Caco-2 (cell line): ENCODE measurements at regions of chr1 and their contacts with region 1.

Region 1: DNA sequence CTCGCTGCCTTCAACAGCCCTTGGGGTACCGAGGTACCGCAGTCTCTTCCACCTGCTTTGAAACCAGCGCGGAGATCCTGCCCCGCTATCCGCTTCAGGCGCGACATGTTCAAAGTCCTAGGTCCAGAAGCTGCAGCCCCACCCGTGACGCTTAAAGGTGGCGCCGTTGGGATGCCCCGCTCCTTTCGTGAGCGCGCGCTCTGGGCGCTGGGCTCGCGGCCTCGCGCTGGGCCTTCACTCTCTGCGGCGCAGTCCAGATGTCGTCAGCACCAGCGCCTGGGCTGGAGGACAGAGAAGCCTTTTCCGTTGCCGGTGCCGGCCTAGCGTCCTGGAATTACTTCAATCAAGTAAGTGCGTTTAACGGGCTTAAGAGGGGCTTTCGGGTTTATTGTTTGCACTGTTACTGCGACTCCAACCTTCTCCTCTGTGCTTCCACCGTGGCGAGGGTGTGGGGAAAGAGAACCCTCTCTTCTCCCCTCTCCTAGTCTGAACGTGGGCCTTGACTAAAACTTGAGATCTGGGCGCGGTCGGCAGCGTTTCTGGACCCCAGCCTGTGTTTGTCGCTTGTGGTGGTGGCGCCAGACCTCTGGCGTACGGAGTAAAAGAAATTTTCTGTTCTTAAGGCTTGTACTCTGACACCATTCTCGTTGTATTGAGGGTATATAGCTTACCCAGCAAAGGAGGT is at the start of gene LRRC40:
- DNase-seq: peak; percentile 92 to 93
- H3K4me3 ChIP-seq: peak within 1 kb of the TSS; percentile 72
- H3K4me3 Mint-ChIP-seq: peak within 1 kb of the TSS; percentile 91
- H3K27ac Mint-ChIP-seq: peak within 1 kb of the TSS; percentile 96
- H3K4me1 ChIP-seq: no peaks in the 10 kb centered on the region
- H3K4me1 Mint-ChIP-seq: no peaks in the 10 kb centered on the region
- H3K27me3 ChIP-seq: no peaks in the 10 kb centered on the region
- H3K27me3 Mint-ChIP-seq: no peaks in the 10 kb centered on the region
- CTCF ChIP-seq: peak in 1 of 2 experiments; percentile 11
- total RNA-seq, gene LRRC40: 12.2 and 15.6 TPM in 2 replicates

Region 2: DNA sequence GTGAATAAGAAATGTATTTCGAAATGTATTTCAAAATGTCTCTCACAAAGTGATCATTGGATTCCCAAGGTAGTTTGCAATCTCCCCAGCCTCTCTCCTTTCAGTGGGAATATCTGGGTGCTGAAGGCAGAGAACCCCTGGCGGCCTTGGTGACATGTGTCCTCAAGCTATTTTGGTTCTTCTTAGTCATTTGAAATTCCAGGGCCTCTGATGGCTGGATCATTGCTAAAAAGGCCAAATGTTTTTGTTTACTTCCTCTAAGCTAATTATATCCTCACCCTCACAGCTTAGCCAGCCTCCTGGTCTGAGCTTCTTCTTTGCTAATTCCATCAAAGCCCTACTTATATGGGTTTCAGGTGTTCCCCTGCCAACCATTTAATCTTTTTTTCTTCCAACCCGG is 71.4 kb before region 1 on chr1:
- CTCF ChIA-PET with region 1: no interaction called
- POLR2A ChIA-PET with region 1: no interaction called
- intact Hi-C with region 1: loop called (anchors 1 kb)
- DNase-seq: no peak
- H3K4me3 ChIP-seq: no peak overlapping the region
- H3K4me3 Mint-ChIP-seq: no peak overlapping the region
- H3K27ac Mint-ChIP-seq: no peak overlapping the region
- H3K4me1 ChIP-seq: no peaks in the 10 kb centered on the region
- H3K4me1 Mint-ChIP-seq: no peaks in the 10 kb centered on the region
- H3K27me3 ChIP-seq: no peaks in the 10 kb centered on the region
- H3K27me3 Mint-ChIP-seq: no peaks in the 10 kb centered on the region
- CTCF ChIP-seq: no peak

Region 3: DNA sequence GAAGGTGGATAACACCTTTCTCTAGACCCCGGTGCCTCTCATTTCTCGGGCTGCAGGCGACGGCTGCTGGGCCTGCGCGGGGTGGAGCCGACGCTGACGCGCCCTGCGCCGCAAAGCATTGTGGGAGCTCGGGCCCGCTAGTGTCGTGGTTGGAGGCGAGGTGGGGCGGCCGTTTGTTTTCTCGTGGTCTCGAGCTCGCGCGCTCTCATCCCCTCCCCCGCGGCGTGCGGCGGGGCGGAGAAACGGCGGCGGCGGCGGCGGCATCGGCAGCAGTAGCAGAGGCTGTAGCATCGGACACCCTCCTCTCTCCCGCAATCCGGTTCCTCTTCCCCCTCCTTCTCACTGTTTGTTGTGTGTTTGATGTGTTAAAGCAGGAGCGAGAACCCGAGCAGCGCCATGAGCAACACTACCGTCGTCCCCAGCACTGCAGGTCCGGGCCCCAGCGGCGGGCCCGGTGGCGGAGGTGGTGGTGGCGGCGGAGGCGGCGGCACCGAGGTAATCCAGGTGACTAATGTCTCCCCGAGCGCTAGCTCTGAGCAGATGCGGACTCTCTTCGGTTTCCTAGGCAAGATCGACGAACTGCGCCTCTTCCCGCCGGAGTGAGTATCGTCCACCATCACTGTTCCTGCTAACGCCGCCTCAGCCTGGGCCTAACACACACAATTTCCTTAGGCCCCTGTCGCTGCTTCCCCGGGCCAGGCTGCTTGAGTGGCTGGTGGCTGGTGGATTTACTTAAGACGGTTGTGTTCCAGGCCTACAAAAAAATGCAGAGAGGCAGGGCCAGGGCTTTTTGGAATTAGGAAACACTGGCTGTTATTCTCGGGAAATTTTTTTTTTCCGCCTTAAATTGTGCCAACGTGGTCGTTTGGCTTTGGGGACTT is 15.9 kb after region 1 on chr1 and contains the start of gene SRSF11:
- CTCF ChIA-PET with region 1: no interaction called
- POLR2A ChIA-PET with region 1: interaction called, 17 read pairs
- intact Hi-C with region 1: loop called (anchors 1 kb)
- DNase-seq: peak; percentile 92 to 93
- H3K4me3 ChIP-seq: peak within 1 kb of the TSS; percentile 73
- H3K4me3 Mint-ChIP-seq: peak within 1 kb of the TSS; percentile 77
- H3K27ac Mint-ChIP-seq: peak within 1 kb of the TSS; percentile 97
- H3K4me1 ChIP-seq: peaks cover 5% of the 10 kb centered on the region; the same call in 1 of the 2 replicates
- H3K4me1 Mint-ChIP-seq: no peaks in the 10 kb centered on the region
- H3K27me3 ChIP-seq: no peaks in the 10 kb centered on the region
- H3K27me3 Mint-ChIP-seq: no peaks in the 10 kb centered on the region
- CTCF ChIP-seq: no peak
- total RNA-seq, gene SRSF11: 116 and 119 TPM in 2 replicates

Region 4: DNA sequence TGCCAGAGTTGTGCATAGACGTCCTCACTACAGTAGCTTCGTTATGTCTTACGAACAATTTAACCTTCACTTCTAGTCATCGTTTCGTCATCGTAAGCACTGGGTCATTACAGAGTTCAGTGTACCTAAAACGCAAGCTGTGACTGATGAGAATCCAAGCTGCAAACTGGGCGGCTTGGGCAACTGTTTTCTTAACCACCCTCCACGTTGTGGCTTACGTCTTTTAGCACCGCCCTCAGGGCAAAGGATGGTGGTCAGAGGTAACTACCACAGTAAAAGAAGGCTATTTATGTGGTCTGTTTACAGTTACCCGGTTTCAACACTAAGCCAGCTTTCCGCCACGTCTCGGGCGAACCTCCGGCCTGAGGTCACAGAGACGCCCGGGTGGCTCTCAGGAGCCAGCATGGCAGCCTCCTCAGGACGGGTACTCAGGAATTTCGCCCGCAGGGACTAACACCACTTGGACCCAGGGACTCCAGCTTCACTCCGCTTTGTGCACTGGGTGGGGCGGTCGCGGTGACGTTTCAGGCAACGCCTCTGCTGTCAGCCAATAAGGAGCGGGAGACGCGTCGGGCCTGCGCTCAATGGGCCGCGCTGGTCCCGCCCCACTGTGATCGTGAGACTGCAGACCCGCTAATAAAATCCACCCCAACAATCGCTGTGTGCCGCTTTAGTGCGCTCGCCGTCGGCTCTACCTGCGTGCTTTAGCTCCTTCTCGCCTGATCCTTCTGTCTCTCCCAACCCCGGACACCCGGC is 205.2 kb after region 1 on chr1 and contains the start of gene CTH:
- CTCF ChIA-PET with region 1: no interaction called
- POLR2A ChIA-PET with region 1: no interaction called
- intact Hi-C with region 1: loop called (anchors 10 kb)
- DNase-seq: peak; percentile 93 to 95
- H3K4me3 ChIP-seq: peak within 1 kb of the TSS; percentile 70
- H3K4me3 Mint-ChIP-seq: peak within 1 kb of the TSS; percentile 93
- H3K27ac Mint-ChIP-seq: peak within 1 kb of the TSS; percentile 92
- H3K4me1 ChIP-seq: no peaks in the 10 kb centered on the region
- H3K4me1 Mint-ChIP-seq: no peaks in the 10 kb centered on the region
- H3K27me3 ChIP-seq: no peaks in the 10 kb centered on the region
- H3K27me3 Mint-ChIP-seq: no peaks in the 10 kb centered on the region
- CTCF ChIP-seq: no peak
- total RNA-seq, gene CTH: 11.1 and 14.0 TPM in 2 replicates

Region 5: GRCh38 chr1:70487910-70488665 is 282.5 kb after region 1 on chr1:
- CTCF ChIA-PET with region 1: no interaction called
- POLR2A ChIA-PET with region 1: no interaction called
- intact Hi-C with region 1: no loop called
- DNase-seq: peak in 1 of 2 experiments; percentile 26
- H3K4me3 ChIP-seq: no peak overlapping the region
- H3K4me3 Mint-ChIP-seq: no peak overlapping the region
- H3K27ac Mint-ChIP-seq: no peak overlapping the region
- H3K4me1 ChIP-seq: no peaks in the 10 kb centered on the region
- H3K4me1 Mint-ChIP-seq: no peaks in the 10 kb centered on the region
- H3K27me3 ChIP-seq: no peaks in the 10 kb centered on the region
- H3K27me3 Mint-ChIP-seq: no peaks in the 10 kb centered on the region
- CTCF ChIP-seq: peak; percentile 34 to 63